Activated naive CD4-positive, alpha-beta T cell treated with anti-CD3 and anti-CD28 coated beads for 36 hours (primary cell): ENCODE measurements at regions of chrX and their contacts with region 1.

Region 1: DNA sequence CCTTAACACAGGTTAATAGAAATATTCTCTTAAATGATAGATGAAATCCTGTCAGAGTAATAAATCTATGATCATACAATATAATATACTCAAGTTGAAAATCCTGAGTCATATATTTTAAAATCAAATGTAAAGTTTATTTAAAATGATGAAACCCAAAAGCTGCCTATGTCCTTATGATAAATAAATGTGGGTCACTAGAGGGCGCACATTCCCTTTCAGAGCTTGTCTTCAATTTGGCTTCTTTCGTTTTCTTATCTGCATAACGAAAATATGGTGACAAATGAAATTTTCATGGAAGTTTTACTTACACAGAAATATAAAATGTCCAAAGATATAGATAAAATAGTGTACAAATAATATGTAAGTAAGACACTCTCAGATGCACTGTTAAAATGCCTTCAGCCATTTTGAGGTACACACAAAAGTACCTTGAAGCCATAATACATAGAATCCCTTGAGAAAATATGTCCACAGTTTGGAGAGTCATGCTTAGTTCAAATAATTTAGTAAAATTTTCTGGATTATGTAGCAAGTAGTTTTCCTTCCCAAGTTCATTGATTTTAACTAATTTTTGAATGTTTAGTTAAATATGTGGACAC is 680.4 kb downstream of the DMD start:
- DNase-seq: peak; percentile 10
- H3K4me3 Mint-ChIP-seq: no peak overlapping the region
- H3K27ac Mint-ChIP-seq: no peak overlapping the region
- H3K4me1 Mint-ChIP-seq: no peaks in the 10 kb centered on the region
- H3K27me3 Mint-ChIP-seq: no peaks in the 10 kb centered on the region

Region 2: DNA sequence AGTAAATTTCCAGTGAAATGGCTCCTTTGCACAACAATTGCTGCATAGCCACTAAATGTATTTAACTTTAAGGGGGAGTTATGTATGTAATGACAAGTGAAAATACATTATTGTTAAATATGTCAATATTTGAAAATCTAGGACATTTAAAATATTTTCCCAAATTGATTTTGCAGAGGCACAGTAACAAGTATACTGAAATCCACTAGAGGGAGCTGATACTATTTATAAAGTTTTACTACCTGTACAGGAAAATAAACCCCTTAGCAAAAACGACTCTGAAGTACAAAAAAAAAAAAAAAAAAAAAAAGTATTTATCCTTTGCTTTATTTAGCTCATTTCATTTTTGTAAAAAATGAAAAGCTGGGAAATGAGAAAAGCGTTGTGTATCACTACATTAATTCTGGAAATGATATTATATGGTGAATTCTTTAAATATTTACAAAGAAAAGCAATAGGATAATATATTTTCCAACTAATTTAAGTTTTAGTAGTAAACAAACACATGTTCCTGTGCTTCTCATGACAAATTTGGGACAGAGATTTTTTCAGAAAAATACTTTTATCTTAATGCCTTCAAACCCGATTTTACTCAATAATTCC is 47.3 kb before region 1 on chrX:
- CTCF ChIA-PET with region 1: no interaction called
- intact Hi-C with region 1: loop called (anchors 1 kb)
- DNase-seq: no peak
- H3K4me3 Mint-ChIP-seq: no peak overlapping the region
- H3K27ac Mint-ChIP-seq: no peak overlapping the region
- H3K4me1 Mint-ChIP-seq: no peaks in the 10 kb centered on the region
- H3K27me3 Mint-ChIP-seq: no peaks in the 10 kb centered on the region

Region 3: DNA sequence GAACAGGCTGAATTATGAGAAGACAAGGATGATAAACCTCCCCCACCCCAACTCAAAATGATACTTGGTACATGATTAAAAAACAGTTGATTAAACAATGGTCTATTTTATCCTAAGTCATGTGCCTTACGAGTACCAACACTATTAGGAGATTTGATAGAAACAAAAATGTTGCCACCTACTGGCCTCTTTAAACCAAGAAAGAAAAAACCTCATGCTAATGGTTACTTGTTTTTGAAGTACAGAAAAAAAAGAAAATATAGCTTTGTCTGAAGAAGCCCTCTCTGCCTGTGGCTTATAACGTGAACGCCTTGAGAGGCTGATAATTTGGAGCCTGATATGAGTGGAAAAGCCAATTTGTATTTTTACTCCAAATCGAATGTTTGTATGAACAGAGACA is 142.3 kb after region 1 on chrX:
- CTCF ChIA-PET with region 1: no interaction called
- intact Hi-C with region 1: loop called (anchors 2 kb)
- DNase-seq: no peak
- H3K4me3 Mint-ChIP-seq: no peak overlapping the region
- H3K27ac Mint-ChIP-seq: no peak overlapping the region
- H3K4me1 Mint-ChIP-seq: no peaks in the 10 kb centered on the region
- H3K27me3 Mint-ChIP-seq: no peaks in the 10 kb centered on the region

Region 4: DNA sequence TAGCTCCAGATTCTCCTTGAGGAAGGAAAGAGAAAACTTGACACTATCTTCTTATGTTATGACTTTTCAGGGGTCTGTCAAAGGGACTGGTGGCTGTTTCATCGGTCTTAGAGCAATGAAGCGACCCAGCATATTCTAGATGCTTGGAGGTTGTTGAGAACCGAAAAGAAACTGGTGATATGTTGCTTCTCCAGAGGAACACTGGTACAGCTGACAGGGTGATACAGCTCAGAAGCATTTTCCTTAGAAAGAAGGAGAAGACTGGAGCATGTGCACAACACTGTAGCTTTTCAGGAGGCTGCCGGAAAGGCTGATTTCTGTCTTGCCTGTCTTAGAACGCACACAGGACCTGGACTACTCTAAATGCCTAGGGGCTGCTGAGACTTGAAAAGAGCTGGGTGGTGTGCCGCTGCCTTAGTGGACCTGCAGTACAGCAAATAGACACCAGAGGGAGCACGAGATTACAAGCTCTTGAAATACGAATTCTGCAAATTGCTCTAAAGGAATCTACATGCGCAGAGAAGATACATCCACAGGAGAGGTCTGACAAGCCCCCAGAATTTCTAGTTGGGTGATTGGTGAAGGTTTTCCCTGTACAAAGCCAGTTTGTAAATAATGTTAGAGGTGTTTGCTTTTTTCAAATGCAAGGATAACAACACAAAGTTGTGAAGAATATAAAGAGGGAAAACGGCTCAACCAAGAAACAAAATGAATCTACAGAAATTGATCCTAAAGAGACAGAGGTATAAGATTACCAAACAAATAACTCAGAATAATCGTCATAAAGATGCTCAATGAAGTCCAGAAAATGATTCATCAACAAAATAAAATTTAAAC is 903.6 kb after region 1 on chrX:
- CTCF ChIA-PET with region 1: no interaction called
- intact Hi-C with region 1: loop called (anchors 5 kb)
- DNase-seq: peak; percentile 45
- H3K4me3 Mint-ChIP-seq: no peak overlapping the region
- H3K27ac Mint-ChIP-seq: no peak overlapping the region
- H3K4me1 Mint-ChIP-seq: no peaks in the 10 kb centered on the region
- H3K27me3 Mint-ChIP-seq: no peaks in the 10 kb centered on the region

Region 5: DNA sequence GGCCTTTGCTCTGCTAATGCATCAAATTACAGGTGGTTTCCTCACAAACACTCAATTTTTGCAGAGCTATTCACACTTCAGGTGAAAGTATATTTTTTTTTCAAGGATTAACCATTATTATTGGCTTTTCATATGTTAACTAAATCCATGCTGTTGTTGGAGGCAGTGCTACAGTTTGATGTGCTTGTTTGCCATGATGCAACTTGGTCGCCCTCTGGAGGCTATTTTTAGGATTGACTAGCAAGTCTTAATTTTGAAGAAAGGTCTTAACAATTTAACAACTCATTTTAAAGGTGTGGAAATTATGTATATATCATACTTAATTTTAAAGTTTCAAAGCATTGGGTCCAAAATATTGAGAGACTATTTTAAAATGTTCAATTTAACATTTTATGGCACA is 1770.0 kb after region 1 on chrX:
- CTCF ChIA-PET with region 1: no interaction called
- intact Hi-C with region 1: loop called (anchors 5 kb)
- DNase-seq: peak; percentile 24
- H3K4me3 Mint-ChIP-seq: no peak overlapping the region
- H3K27ac Mint-ChIP-seq: no peak overlapping the region
- H3K4me1 Mint-ChIP-seq: no peaks in the 10 kb centered on the region
- H3K27me3 Mint-ChIP-seq: no peaks in the 10 kb centered on the region